Naive thymus-derived CD4-positive, alpha-beta T cell (primary cell): ENCODE measurements at regions of chr13 and their contacts with region 1.

Region 1: DNA sequence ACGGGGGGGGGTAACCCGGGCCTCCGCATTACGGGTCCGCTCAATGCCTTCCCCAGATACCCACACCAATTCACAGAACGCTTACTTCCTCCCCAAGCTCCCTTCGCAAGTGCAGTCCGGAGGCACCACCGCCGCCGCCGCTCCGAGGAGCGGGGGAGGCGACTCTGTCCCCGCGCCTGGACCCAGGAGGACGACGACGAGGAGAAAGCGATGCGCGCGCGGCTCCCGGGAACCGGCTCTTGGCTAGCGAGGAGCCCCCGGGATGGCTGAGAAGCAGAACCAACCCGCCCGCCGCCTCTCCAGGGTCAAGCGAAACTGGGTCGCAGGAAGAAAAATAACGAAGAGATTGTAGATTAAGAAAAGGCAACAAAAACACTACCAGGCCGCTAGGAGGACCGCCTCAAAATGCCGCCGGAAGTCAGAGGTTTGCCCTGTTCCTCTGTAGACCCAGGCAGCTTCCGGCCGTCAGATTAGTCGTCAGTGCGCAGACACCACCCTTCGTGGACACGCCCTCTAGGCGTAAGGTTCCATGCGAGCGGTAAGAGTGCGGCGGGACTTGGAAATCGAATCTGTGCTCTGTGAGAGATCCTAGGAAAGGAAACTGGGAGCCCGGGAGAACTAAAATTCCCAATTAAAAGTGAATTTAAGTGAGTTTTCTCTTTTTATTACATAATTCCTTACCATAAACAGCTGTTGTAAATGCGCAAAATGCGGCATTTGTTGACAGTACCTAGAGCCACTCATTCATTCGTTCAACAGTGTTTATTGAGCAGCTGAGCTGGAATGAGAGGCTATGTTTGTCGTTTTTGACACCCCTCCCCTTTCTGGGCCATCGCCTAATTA is at the start of gene ZC3H13:
- DNase-seq: peak; percentile 75 to 95 (median 92)
- ATAC-seq: peak; percentile 100
- H3K4me3 ChIP-seq: peak within 1 kb of the TSS; percentile 89
- H3K4me3 Mint-ChIP-seq: peak within 1 kb of the TSS; percentile 87 to 96 (median 94)
- H3K27ac ChIP-seq: peak within 1 kb of the TSS; percentile 98
- H3K27ac Mint-ChIP-seq: peak within 1 kb of the TSS; percentile 93 to 99 (median 97)
- H3K4me1 ChIP-seq: peaks cover 22 to 26% of the 10 kb centered on the region in 2 donors
- H3K4me1 Mint-ChIP-seq: peaks cover 19 to 63% (median 46%) of the 10 kb centered on the region in 7 donors
- H3K27me3 ChIP-seq: no peaks in the 10 kb centered on the region
- H3K27me3 Mint-ChIP-seq: peaks cover 5 to 32% (median 15%) of the 10 kb centered on the region in 5 donors
- total RNA-seq, gene ZC3H13: 41.1 to 67.0 (median 46.5) TPM

Region 2: GRCh38 chr13:44988973-44989817 is 1063.3 kb before region 1 on chr13 and contains the starts of genes GPALPP1 and NUFIP1:
- CTCF ChIA-PET with region 1: no interaction called
- POLR2A ChIA-PET with region 1: no interaction called
- intact Hi-C with region 1: loop called (anchors 1 to 2 kb)
- DNase-seq: peak; percentile 79 to 94 (median 90)
- ATAC-seq: peak; percentile 98
- H3K4me3 ChIP-seq: peak within 1 kb of the TSS; percentile 94
- H3K4me3 Mint-ChIP-seq: peak within 1 kb of the TSS; percentile 96 to 100 (median 98)
- H3K27ac ChIP-seq: peak within 1 kb of the TSS; percentile 95
- H3K27ac Mint-ChIP-seq: peak within 1 kb of the TSS; percentile 91 to 99 (median 98)
- H3K4me1 ChIP-seq: peaks cover 18 to 27% of the 10 kb centered on the region in 2 donors
- H3K4me1 Mint-ChIP-seq: peaks cover 42 to 81% (median 68%) of the 10 kb centered on the region in 7 donors
- H3K27me3 ChIP-seq: no peaks in the 10 kb centered on the region
- H3K27me3 Mint-ChIP-seq: no peaks in the 10 kb centered on the region
- total RNA-seq, gene GPALPP1: 29.7 to 43.1 (median 33.0) TPM
- total RNA-seq, gene NUFIP1: 3.7 to 6.6 (median 5.4) TPM

Region 3: GRCh38 chr13:45417790-45418534 is 634.6 kb before region 1 on chr13 and contains the start of gene SLC25A30:
- CTCF ChIA-PET with region 1: no interaction called
- POLR2A ChIA-PET with region 1: no interaction called
- intact Hi-C with region 1: loop called in 1 of 2 experiments (anchors 1 kb)
- DNase-seq: peak; percentile 73 to 90 (median 87)
- ATAC-seq: peak; percentile 97
- H3K4me3 ChIP-seq: peak within 1 kb of the TSS; percentile 97
- H3K4me3 Mint-ChIP-seq: peak within 1 kb of the TSS; percentile 90 to 98 (median 96)
- H3K27ac ChIP-seq: peak within 1 kb of the TSS; percentile 79
- H3K27ac Mint-ChIP-seq: peak within 1 kb of the TSS; percentile 92 to 99 (median 96)
- H3K4me1 ChIP-seq: peaks cover 4 to 21% of the 10 kb centered on the region in 2 donors
- H3K4me1 Mint-ChIP-seq: peaks cover 0 to 36% (median 27%) of the 10 kb centered on the region in 7 donors
- H3K27me3 ChIP-seq: no peaks in the 10 kb centered on the region
- H3K27me3 Mint-ChIP-seq: no peaks in the 10 kb centered on the region
- total RNA-seq, gene SLC25A30: 13.3 to 29.4 (median 23.6) TPM

Region 4: DNA sequence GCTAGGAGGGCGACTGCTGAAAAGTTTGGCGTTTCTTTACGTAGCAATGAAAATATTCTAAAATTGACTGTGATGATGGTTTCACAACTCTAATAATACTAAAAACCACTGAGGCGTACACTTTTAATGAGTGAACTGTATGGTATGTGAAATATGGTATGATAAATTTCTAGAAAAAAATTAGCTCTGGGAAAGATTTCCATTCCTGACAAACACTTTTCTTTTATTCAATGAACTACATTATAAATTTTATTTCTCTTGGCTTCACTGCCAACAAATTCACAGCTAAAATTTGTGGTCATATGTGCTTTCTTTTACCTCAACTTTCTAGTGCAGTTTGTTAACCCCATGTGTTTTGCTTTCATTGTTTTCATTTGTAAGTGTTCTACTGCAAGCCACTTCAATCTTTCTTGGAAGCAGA is 11.1 kb before region 1 on chr13:
- CTCF ChIA-PET with region 1: no interaction called
- POLR2A ChIA-PET with region 1: interaction called, 4 read pairs
- intact Hi-C with region 1: loop called in 1 of 2 experiments (anchors 1 kb)
- DNase-seq: no peak
- ATAC-seq: no peak
- H3K4me3 ChIP-seq: no peak overlapping the region
- H3K4me3 Mint-ChIP-seq: no peak overlapping the region
- H3K27ac ChIP-seq: no peak overlapping the region
- H3K27ac Mint-ChIP-seq: no peak overlapping the region
- H3K4me1 ChIP-seq: peaks cover 0 to 8% of the 10 kb centered on the region in 2 donors
- H3K4me1 Mint-ChIP-seq: peaks cover 0 to 36% (median 14%) of the 10 kb centered on the region in 7 donors
- H3K27me3 ChIP-seq: no peaks in the 10 kb centered on the region
- H3K27me3 Mint-ChIP-seq: no peaks in the 10 kb centered on the region

Region 5: GRCh38 chr13:46211483-46212351 is 159.2 kb after region 1 on chr13 and contains the start of gene LRRC63:
- CTCF ChIA-PET with region 1: no interaction called
- POLR2A ChIA-PET with region 1: no interaction called
- intact Hi-C with region 1: loop called (anchors 1 kb)
- DNase-seq: peak; percentile 69 to 88 (median 80)
- ATAC-seq: peak; percentile 98
- H3K4me3 ChIP-seq: peak within 1 kb of the TSS; percentile 81
- H3K4me3 Mint-ChIP-seq: peak within 1 kb of the TSS; percentile 83 to 100 (median 93)
- H3K27ac ChIP-seq: peak within 1 kb of the TSS; percentile 88
- H3K27ac Mint-ChIP-seq: peak within 1 kb of the TSS; percentile 91 to 98 (median 94)
- H3K4me1 ChIP-seq: peaks cover 5 to 8% of the 10 kb centered on the region in 2 donors
- H3K4me1 Mint-ChIP-seq: peaks cover 7 to 37% (median 26%) of the 10 kb centered on the region in 7 donors
- H3K27me3 ChIP-seq: no peaks in the 10 kb centered on the region
- H3K27me3 Mint-ChIP-seq: peaks cover 0 to 6% (median 0%) of the 10 kb centered on the region in 5 donors
- total RNA-seq, gene LRRC63: 0.19 to 0.80 (median 0.49) TPM

Region 6: DNA sequence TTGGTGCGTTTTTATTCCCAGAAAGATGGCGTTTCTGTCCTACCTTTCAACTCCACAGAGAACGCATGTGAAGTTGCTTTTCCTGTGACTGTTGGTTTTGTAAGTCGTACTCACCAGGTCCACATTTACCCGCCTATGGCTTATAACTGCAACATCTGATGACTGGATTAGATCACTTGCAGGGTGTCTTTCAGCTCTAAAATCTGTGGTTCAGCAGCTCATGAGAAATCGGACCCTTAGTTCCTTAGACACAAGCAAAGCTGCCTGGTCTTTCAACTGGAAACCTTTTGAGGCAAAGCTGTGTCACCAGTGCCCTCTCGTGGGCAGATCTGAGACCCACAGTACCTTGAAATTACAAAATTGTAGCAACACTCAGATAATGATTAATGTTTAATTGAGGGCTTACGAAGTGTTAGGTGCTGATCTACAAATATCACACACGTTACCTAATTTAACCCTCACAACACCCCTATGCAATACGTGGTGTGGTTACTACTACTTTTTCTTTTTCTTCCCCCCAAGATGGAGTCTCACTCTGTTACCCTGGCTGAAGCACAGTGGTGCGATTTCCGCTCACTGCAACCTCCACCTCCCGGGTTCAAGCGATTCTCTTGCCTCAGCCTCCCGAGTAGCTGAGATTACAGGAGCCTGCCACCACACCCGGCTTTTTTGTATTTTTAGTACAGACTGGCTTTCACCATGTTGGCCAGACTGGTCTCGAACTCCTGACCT is 269.1 kb after region 1 on chr13:
- CTCF ChIA-PET with region 1: interaction called, 3 read pairs
- POLR2A ChIA-PET with region 1: interaction called, 3 read pairs
- intact Hi-C with region 1: loop called (anchors 1 to 5 kb)
- DNase-seq: peak; percentile 53 to 80 (median 75)
- ATAC-seq: peak; percentile 92
- H3K4me3 ChIP-seq: peak overlapping the region; percentile 39
- H3K4me3 Mint-ChIP-seq: peak overlapping the region; percentile 82 to 93 (median 86)
- H3K27ac ChIP-seq: peak overlapping the region; percentile 56
- H3K27ac Mint-ChIP-seq: peak overlapping the region; percentile 86 to 98 (median 95)
- H3K4me1 ChIP-seq: peaks cover 11 to 12% of the 10 kb centered on the region in 2 donors
- H3K4me1 Mint-ChIP-seq: peaks cover 23 to 48% (median 42%) of the 10 kb centered on the region in 7 donors
- H3K27me3 ChIP-seq: no peaks in the 10 kb centered on the region
- H3K27me3 Mint-ChIP-seq: no peaks in the 10 kb centered on the region

Region 7: DNA sequence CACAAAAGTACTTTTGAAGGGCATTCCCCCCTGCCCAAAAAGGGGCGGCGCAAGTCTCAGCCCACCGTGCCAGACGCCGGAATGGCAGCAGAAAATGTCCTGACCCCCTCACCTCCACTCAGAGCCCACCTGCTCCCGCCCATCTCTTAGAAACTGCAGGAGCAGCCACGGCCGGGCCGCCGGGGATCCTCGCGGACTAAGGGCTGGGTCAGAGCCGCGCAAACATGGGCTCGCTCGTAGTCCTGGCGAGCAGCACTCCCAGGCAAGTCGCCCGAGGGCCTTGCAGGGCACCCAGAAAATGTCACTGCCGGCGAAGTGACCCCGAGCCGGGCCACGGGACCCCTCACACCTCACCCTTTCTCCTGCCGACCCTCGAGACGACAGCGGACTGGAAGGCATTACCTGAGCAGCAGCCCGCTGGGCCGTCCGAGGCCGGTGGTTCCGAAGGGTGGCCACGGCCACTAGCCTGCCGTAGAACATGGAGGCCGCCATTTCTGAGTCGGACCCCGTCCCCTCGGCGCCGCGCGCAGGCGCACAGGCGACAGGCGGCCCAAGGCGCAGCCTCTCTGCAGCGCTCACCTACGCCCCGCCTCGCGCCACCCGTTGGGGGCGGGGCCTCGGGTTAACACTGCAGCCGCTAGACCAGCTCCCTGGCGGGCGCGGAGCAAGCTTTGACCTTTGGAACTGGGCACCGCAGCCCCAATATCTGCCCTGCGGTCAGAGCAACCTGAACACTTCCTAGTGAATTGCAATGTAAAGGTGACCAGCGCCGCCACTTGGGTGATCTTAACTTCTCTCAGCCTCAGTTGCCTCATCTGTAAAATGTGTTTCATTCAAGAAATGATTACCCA is 1948.5 kb after region 1 on chr13 and contains the start of gene SUCLA2:
- CTCF ChIA-PET with region 1: no interaction called
- POLR2A ChIA-PET with region 1: no interaction called
- intact Hi-C with region 1: loop called in 1 of 2 experiments (anchors 5 kb)
- DNase-seq: peak; percentile 75 to 96 (median 88)
- ATAC-seq: peak; percentile 100
- H3K4me3 ChIP-seq: peak within 1 kb of the TSS; percentile 97
- H3K4me3 Mint-ChIP-seq: peak within 1 kb of the TSS; percentile 88 to 97 (median 96)
- H3K27ac ChIP-seq: peak within 1 kb of the TSS; percentile 81
- H3K27ac Mint-ChIP-seq: peak within 1 kb of the TSS; percentile 75 to 96 (median 91)
- H3K4me1 ChIP-seq: peaks cover 7 to 10% of the 10 kb centered on the region in 2 donors
- H3K4me1 Mint-ChIP-seq: peaks cover 24 to 48% (median 42%) of the 10 kb centered on the region in 7 donors
- H3K27me3 ChIP-seq: no peaks in the 10 kb centered on the region
- H3K27me3 Mint-ChIP-seq: peaks cover 0 to 2% (median 0%) of the 10 kb centered on the region in 5 donors
- total RNA-seq, gene SUCLA2: 20.0 to 36.6 (median 26.4) TPM